Activated T-helper 2 cell treated with anti-CD3 and anti-CD28 coated beads, Interferon-gamma antibody, Interleukin-2, Interleukin-4, amounts not matched to agents 10 μg/mL and 5 μg/mL and 100 μg/mL, durations not matched to agents 14 hours and 24 hours and 36 hours (primary cell): ENCODE measurements at regions of chr16 and their contacts with region 1.

Region 1: DNA sequence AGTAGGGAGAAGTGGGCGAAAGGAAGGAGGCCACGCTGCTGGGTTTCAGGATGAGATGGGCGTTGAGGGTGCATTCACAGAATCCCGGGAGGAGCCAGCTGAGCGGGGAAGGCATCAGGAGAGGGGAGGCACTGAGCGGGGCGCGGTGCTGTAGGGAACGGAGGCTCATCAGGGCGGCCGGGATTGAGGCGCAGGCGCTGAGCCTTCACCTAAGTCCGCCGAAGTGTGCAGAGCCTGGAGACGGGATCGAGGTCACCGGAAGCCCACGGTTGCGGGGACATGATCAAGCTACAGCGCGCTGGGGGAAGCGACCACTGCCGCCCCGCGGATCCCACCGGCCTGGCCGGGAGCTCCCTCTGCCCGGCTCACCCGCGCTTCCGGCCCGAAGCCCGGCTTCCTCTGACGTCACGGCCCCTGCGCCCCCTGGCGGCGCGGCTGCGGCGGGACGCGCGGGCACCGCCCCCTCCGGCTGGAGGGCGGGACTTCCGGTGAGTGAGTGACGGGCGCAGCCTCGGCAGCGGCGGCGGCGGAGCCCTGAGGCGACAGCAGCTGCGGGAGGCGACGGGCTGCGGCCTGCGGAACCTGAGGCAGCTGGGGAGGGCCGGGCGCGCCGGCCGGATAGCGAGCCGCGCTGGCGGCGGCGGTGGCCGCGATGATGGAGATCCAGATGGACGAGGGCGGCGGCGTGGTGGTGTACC is at the start of gene MAPK8IP3:
- DNase-seq: peak; percentile 94
- H3K4me3 Mint-ChIP-seq: peak within 1 kb of the TSS; percentile 96
- H3K27ac Mint-ChIP-seq: peak within 1 kb of the TSS; percentile 98
- H3K4me1 Mint-ChIP-seq: peaks cover 17% of the 10 kb centered on the region
- H3K27me3 Mint-ChIP-seq: no peaks in the 10 kb centered on the region
- total RNA-seq, gene MAPK8IP3: 74.8 and 77.5 TPM in 2 replicates

Region 2: GRCh38 chr16:1533443-1533951 is 172.3 kb before region 1 on chr16 and contains the start of gene TMEM204:
- intact Hi-C with region 1: loop called (anchors 10 kb)
- DNase-seq: peak; percentile 37
- H3K4me3 Mint-ChIP-seq: peak within 1 kb of the TSS; percentile 94
- H3K27ac Mint-ChIP-seq: peak within 1 kb of the TSS; percentile 80
- H3K4me1 Mint-ChIP-seq: peaks cover 31% of the 10 kb centered on the region
- H3K27me3 Mint-ChIP-seq: no peaks in the 10 kb centered on the region
- total RNA-seq, gene TMEM204: 17.2 and 17.8 TPM in 2 replicates

Region 3: GRCh38 chr16:1677802-1678496 is 27.9 kb before region 1 on chr16 and contains the start of gene JPT2:
- intact Hi-C with region 1: loop called (anchors 1 kb)
- DNase-seq: peak; percentile 95
- H3K4me3 Mint-ChIP-seq: peak within 1 kb of the TSS; percentile 92
- H3K27ac Mint-ChIP-seq: peak within 1 kb of the TSS; percentile 77
- H3K4me1 Mint-ChIP-seq: peaks cover 20% of the 10 kb centered on the region
- H3K27me3 Mint-ChIP-seq: no peaks in the 10 kb centered on the region
- total RNA-seq, gene JPT2: 95.0 and 98.0 TPM in 2 replicates